HCT116 (cell line): ENCODE measurements at regions of chr1 and their contacts with region 1.

Region 1: DNA sequence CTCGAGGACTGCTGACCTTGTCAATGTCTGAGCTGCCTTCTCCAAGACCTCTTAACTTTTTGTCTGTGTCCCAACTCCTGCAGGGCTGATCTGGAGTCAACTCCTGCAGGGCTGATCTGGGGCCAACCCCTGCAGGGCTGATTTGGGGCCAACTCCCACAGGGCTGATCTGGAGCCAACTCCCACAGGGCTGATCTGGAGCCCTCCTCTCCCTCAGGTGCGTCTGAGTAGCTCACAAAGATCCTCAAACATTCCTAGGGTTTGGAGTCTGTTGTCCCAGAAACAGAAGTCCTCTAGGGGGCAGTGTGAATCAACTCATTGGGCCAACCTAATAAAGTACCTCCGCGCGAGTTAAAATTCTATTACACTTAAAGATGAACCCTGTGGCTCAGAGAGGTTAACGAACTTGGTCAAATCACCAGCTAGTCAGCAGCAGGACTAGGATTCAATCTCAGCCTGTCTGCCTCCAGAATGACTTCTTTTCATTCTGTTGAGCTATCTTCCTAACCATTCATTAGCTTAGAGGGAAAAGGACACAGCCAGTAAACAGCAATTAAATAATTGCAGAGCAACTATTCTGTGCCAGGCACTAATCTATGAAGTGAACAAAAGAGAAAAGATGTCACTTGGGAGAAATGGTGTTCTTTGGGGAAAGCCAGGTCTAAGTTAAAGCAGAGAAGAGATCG is 17.2 kb upstream of the RLF start:
- DNase-seq: peak; percentile 78
- ATAC-seq: peak; percentile 99
- H3K4me3 ChIP-seq: no peak overlapping the region
- H3K27ac ChIP-seq: no peak overlapping the region
- H3K4me1 ChIP-seq: peaks cover 4 to 18% of the 10 kb centered on the region in 2 experiments; a peak in 3 of 4 replicates
- H3K27me3 ChIP-seq: no peaks in the 10 kb centered on the region
- CTCF ChIP-seq: peak; percentile 82 to 90 (median 90)
- POLR2A ChIP-seq: no peak
- RAD21 ChIP-seq: peak; percentile 93

Region 2: DNA sequence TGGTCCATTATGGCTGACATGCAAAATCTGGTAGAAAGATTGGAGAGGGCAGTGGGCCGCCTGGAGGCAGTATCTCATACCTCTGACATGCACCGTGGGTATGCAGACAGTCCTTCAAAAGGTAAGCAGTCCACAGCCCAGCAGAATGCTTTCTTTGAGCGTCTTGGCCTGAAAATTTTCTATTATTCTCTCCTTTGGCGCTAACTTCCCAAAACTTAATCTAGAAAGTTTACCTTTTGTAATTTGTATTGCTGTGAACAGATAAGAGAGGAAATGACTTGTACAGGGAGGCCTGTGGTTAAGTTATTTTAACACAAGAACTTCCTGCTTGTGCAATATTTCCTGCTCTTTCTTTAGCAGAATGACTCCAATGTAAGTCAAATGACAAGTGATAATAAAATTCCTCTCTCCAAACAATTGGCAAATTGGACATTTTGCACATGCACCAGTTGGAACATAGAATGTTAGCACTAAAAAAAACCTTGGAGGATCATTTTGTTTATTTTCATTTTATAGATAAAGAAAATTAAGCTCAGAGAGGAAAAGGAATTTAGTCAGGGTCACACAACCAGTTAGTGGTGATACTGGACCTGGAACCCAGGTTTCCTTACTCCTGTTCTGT is 84.6 kb before region 1 on chr1:
- CTCF ChIA-PET with region 1: no interaction called
- POLR2A ChIA-PET with region 1: no interaction called
- RAD21 ChIA-PET with region 1: no interaction called
- intact Hi-C with region 1: no loop called
- DNase-seq: no peak
- ATAC-seq: no peak
- H3K4me3 ChIP-seq: no peak overlapping the region
- H3K27ac ChIP-seq: no peak overlapping the region
- H3K4me1 ChIP-seq: no peaks in the 10 kb centered on the region
- H3K27me3 ChIP-seq: no peaks in the 10 kb centered on the region
- CTCF ChIP-seq: no peak
- POLR2A ChIP-seq: no peak
- RAD21 ChIP-seq: no peak

Region 3: DNA sequence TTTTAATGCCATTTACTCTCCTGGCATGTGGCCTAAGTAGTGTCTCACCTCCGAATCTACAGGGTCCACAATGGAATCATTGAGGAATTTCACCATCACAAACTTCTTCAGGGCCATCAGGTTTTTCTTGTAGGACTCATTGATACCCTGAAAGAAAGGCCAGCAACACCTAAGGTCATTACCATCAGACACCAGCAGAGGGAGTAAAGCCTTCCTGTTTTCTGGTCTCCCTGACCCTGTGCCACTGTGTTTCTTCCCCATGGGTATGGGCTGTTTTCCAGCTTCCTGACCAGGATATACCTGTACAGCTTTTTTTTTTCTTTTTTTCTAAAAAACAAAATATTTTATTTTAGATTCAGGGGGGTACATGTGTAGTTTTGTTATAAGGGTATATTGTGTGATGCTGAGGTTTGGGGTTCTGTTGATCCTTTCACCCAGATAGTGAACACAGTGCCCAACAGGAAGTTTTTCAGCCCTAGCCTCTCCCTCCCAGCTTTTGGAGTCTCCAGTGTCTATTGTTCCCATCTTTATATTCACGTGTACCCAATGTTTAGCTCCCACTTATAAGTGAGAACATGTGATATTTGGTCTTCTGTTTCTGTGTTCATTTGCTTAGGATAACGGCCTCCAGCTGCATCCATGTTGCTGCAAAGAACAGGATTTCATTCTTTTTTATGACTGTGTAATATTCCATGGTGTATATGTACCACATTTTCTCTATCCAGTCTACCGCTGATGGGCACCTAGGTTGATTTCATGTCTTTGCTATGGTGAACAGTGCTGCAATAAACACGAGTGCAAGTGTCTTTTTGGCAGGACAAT is 65.3 kb before region 1 on chr1:
- CTCF ChIA-PET with region 1: interaction called, 4 read pairs
- POLR2A ChIA-PET with region 1: no interaction called
- RAD21 ChIA-PET with region 1: no interaction called
- intact Hi-C with region 1: loop called (anchors 5 kb)
- DNase-seq: peak; percentile 41
- ATAC-seq: peak; percentile 89
- H3K4me3 ChIP-seq: no peak overlapping the region
- H3K27ac ChIP-seq: no peak overlapping the region
- H3K4me1 ChIP-seq: no peaks in the 10 kb centered on the region
- H3K27me3 ChIP-seq: no peaks in the 10 kb centered on the region
- CTCF ChIP-seq: peak; percentile 63 to 81 (median 71); a peak in 5 of 6 replicates
- POLR2A ChIP-seq: no peak
- RAD21 ChIP-seq: peak; percentile 70

Region 4: GRCh38 chr1:40162753-40163441 is 18.9 kb after region 1 on chr1:
- CTCF ChIA-PET with region 1: no interaction called
- POLR2A ChIA-PET with region 1: no interaction called
- RAD21 ChIA-PET with region 1: no interaction called
- intact Hi-C with region 1: no loop called
- DNase-seq: no peak
- ATAC-seq: no peak
- H3K4me3 ChIP-seq: peak overlapping the region; percentile 91 to 97
- H3K27ac ChIP-seq: no peak overlapping the region
- H3K4me1 ChIP-seq: peaks cover 6 to 13% of the 10 kb centered on the region in 2 experiments
- H3K27me3 ChIP-seq: no peaks in the 10 kb centered on the region
- CTCF ChIP-seq: no peak
- POLR2A ChIP-seq: no peak
- RAD21 ChIP-seq: no peak

Region 5: GRCh38 chr1:40252601-40253000 is 108.6 kb after region 1 on chr1:
- CTCF ChIA-PET with region 1: no interaction called
- POLR2A ChIA-PET with region 1: no interaction called
- RAD21 ChIA-PET with region 1: no interaction called
- intact Hi-C with region 1: no loop called
- DNase-seq: no peak
- ATAC-seq: no peak
- H3K4me3 ChIP-seq: no peak overlapping the region
- H3K27ac ChIP-seq: no peak overlapping the region
- H3K4me1 ChIP-seq: peaks cover 4 to 9% of the 10 kb centered on the region in 2 experiments
- H3K27me3 ChIP-seq: no peaks in the 10 kb centered on the region
- CTCF ChIP-seq: no peak
- POLR2A ChIP-seq: no peak
- RAD21 ChIP-seq: no peak

Region 6: DNA sequence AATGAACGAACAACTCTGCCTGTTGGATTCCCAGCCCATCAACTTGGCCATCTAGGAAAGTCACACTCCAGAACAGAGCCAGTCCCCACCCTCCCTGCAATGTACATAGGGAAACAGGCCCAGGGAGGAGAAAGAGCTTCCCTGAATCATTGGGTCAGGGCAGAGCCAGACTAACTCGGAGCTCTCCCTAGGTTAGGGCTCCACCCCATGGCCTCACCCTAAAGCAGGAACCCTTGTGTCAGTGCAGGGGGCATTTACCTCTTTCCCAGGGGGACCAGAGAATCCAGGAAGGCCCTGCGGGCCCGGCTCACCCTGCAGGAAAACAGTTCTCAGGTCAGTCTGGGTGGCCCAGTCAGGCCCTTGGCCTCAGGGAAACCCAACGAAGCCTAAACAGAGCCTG is 161.4 kb after region 1 on chr1:
- CTCF ChIA-PET with region 1: interaction called, 21 read pairs
- POLR2A ChIA-PET with region 1: no interaction called
- RAD21 ChIA-PET with region 1: no interaction called
- intact Hi-C with region 1: no loop called
- DNase-seq: no peak
- ATAC-seq: peak; percentile 68
- H3K4me3 ChIP-seq: no peak overlapping the region
- H3K27ac ChIP-seq: peak overlapping the region; percentile 62
- H3K4me1 ChIP-seq: peaks cover 16 to 21% of the 10 kb centered on the region in 2 experiments
- H3K27me3 ChIP-seq: no peaks in the 10 kb centered on the region
- CTCF ChIP-seq: peak in 2 of 3 experiments; percentile 24 to 35; a peak in 2 of 6 replicates
- POLR2A ChIP-seq: no peak
- RAD21 ChIP-seq: peak; percentile 69

Region 7: DNA sequence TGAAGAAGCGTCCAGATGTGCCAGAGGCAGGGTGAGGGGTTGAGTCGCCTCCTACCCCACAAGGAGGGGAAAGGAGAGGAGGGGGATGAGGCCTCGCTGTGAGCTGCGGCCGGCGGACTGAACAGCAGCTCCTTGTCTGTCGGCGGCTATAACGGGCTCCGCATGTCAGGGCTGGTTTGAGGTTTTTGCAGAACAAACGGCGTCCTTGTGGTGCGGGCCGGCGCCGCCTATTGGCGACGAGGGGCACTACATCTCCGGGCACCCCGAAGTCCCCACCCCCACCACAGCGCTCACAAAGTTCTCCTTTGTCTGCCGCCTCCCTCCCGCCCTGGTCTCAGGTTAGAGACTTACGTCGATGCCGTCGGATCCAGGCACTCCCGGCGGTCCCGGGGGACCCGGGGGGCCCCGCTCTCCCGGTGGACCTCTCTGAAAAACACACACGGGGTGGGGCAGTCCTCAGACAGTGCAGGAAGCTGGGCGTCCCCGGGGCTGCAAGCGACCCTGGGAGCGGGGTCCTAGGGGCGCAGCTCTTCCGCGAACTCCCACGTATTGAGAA is 171.3 kb after region 1 on chr1:
- CTCF ChIA-PET with region 1: interaction called, 23 read pairs
- POLR2A ChIA-PET with region 1: no interaction called
- RAD21 ChIA-PET with region 1: interaction called in 1 of 2 experiments, 3 read pairs
- intact Hi-C with region 1: no loop called
- DNase-seq: peak; percentile 73
- ATAC-seq: peak; percentile 75
- H3K4me3 ChIP-seq: peak overlapping the region; percentile 47 to 54
- H3K27ac ChIP-seq: peak overlapping the region; percentile 35; the same call in 1 of the 2 replicates
- H3K4me1 ChIP-seq: peaks cover 6 to 36% of the 10 kb centered on the region in 2 experiments; a peak in 3 of 4 replicates
- H3K27me3 ChIP-seq: no peaks in the 10 kb centered on the region
- CTCF ChIP-seq: peak; percentile 68 to 93 (median 80); a peak in 5 of 6 replicates
- POLR2A ChIP-seq: no peak
- RAD21 ChIP-seq: peak; percentile 75

Region 8: DNA sequence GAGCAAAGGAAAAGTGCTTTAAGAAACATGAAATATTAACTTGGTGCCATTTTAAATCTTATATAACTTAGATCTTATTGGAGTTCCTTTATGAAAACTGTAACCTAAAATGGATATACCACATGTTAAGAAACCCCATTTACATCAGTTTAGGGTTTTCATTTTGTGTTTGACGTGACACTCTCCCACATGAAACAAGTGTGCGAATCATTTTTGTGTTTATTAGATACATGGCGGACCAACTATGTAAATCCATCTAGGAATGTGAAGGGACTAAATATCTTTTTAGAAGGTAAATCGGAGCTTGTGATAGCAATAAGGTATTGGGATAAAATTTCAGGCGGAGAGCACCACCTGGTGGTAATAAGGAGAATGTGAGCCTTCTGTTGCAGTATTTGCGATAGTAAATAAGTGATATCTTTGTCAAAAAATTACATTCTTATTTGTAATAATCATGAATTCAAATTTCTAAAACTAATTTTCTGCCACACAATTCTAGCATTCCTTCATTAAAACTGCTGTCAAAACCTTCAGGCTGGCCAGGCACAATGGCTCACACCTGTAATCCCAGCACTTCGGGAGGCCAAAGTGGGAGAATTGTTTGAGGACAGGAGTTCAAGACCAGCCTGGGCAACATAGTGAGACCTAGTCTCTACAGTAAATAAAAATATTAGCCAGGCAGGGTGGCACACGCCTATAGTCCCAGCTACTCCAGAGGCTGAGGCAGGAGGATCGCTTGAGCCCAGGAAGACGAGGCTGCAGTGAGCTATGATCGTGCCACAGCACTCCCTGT is 260.8 kb after region 1 on chr1:
- CTCF ChIA-PET with region 1: interaction called, 45 read pairs
- POLR2A ChIA-PET with region 1: no interaction called
- RAD21 ChIA-PET with region 1: interaction called in 1 of 2 experiments, 3 read pairs
- intact Hi-C with region 1: loop called (anchors 2 kb)
- DNase-seq: peak; percentile 51
- ATAC-seq: peak; percentile 79
- H3K4me3 ChIP-seq: no peak overlapping the region
- H3K27ac ChIP-seq: no peak overlapping the region
- H3K4me1 ChIP-seq: no peaks in the 10 kb centered on the region
- H3K27me3 ChIP-seq: no peaks in the 10 kb centered on the region
- CTCF ChIP-seq: peak; percentile 72 to 86 (median 79)
- POLR2A ChIP-seq: no peak
- RAD21 ChIP-seq: peak; percentile 85

Region 9: DNA sequence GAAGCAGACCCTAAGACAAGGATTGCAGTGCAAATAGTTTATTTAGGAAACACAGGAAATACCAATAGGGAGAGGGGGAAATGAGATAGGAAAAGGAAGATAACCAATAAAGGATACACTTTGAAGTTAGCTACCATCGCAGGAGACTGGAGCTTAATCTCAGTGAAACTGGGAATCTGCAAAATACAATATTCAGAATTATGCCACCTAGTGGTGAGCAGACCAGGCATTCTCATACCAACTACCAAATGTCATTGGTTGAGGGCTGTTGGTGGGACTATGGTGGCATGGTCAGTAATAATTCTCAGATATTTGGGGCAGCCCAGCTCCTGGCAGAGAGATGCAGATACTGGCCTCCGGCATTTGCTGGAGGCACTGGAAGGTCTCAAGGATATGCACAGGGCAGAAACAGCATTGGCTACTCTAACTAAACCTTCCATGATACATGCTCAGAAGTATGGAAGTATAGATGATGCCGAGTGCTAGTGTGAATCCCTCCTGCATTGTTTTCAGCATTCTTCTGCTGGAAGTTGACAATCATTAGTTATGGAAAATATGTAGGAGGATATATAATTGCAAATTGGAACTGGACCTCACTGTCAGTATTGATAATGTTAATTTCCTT is 294.5 kb after region 1 on chr1:
- CTCF ChIA-PET with region 1: interaction called, 16 read pairs
- POLR2A ChIA-PET with region 1: no interaction called
- RAD21 ChIA-PET with region 1: no interaction called
- intact Hi-C with region 1: no loop called
- DNase-seq: no peak
- ATAC-seq: peak; percentile 80
- H3K4me3 ChIP-seq: no peak overlapping the region
- H3K27ac ChIP-seq: no peak overlapping the region
- H3K4me1 ChIP-seq: no peaks in the 10 kb centered on the region
- H3K27me3 ChIP-seq: no peaks in the 10 kb centered on the region
- CTCF ChIP-seq: peak; percentile 37 to 76 (median 66); a peak in 5 of 6 replicates
- POLR2A ChIP-seq: no peak
- RAD21 ChIP-seq: peak; percentile 37

Region 10: DNA sequence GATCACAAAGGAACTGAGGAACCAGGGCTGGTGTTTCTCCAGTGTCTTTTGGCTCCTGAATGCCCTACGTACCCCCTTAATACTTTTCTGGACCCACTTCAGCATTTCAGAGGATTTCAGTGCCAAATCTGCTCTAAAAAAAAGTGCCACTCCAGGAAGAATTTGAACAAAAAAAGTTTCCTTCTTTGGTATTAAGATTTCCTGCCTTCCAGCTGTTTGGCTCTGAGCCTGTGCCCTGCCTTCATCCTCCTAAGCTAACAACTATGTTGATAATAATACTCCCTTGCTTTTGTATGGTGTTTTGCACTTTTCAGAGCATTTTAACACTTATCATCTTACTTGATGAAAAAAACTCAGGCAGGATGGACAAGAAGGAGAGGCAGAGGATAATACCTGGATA is 532.5 kb after region 1 on chr1:
- CTCF ChIA-PET with region 1: no interaction called
- POLR2A ChIA-PET with region 1: no interaction called
- RAD21 ChIA-PET with region 1: no interaction called
- intact Hi-C with region 1: no loop called
- DNase-seq: no peak
- ATAC-seq: no peak
- H3K4me3 ChIP-seq: no peak overlapping the region
- H3K27ac ChIP-seq: no peak overlapping the region
- H3K4me1 ChIP-seq: no peaks in the 10 kb centered on the region
- H3K27me3 ChIP-seq: no peaks in the 10 kb centered on the region
- CTCF ChIP-seq: no peak
- POLR2A ChIP-seq: no peak
- RAD21 ChIP-seq: no peak